ENCODE measurements at regions of chr14 and their contacts with region 1.

Region 1: GRCh38 chr14:50860478-50861086 is 11.3 kb upstream of the ABHD12B start:
- DNase-seq: peak; percentile 78 to 87
- ATAC-seq: peak; percentile 65 to 80; a peak in 5 of 6 replicates
- H3K4me3 ChIP-seq: peak overlapping the region; percentile 47
- H3K27ac ChIP-seq: peak overlapping the region; percentile 60 to 76
- H3K4me1 ChIP-seq: 0 out of 3 replicates have a peak, but pooled peaks cover 3% of the 10 kb centered on the region
- CTCF ChIP-seq: peak; percentile 75
- EP300 ChIP-seq: no peak
- POLR2A ChIP-seq: no peak
- RAD21 ChIP-seq: peak; percentile 74 to 76

Region 2: DNA sequence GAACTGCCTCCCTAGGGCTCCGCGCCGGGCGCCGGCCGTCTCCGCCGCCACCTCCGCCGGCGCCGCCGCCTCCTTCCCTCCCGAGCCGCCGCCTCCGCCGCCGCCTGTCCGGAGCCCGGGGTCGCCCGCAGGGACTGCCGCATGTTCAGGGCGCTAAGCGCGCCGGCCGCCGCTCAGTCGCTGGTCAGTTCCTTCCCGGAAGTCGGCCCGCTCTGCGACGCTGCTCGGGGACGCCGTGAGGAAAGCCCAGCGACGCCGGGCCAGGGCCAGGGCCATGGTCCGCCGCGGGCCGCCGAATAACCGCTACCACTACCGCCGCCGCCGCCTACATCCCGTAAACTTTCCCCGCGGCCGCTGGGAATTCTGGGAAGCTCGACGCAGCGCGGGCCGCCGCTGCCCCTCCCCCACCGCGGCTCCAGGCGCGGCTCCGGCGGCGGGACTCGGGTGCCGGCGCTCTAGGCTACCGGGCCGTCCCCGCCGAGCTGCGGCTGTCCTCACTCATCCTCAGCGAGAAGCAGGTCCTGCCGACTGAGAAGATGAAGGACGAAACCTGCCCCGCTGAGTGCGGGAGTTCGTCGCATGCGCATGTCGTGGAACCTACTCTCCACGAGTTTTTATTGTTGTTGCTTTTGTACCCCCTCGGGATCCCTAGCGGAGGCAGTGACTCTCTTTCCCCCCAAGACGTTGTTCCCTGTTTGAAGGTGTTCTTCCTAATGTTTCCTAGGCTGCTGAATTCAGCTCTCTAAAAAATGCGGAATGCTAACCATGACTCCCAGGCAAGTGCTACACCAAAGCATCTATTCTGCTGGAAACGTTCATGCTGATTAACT is 192.4 kb before region 1 on chr14 and contains the start of gene SAV1:
- CTCF ChIA-PET with region 1: no interaction called
- POLR2A ChIA-PET with region 1: interaction called, 11 read pairs
- DNase-seq: peak in 1 of 2 experiments; percentile 83
- ATAC-seq: peak; percentile 86 to 88
- H3K4me3 ChIP-seq: peak within 1 kb of the TSS; percentile 74
- H3K27ac ChIP-seq: peak within 1 kb of the TSS; percentile 87 to 96
- H3K4me1 ChIP-seq: peaks cover 16% of the 10 kb centered on the region
- CTCF ChIP-seq: 0 out of 3 replicates have a peak, but pooled peaks have one; percentile 10
- EP300 ChIP-seq: no peak
- POLR2A ChIP-seq: peak; percentile 92
- RAD21 ChIP-seq: no peak
- polyA plus RNA-seq, gene SAV1: 20.1 and 20.3 TPM in 2 replicates

Region 3: GRCh38 chr14:50830932-50831725 is 29.5 kb before region 1 on chr14 and contains the start of gene NIN:
- CTCF ChIA-PET with region 1: interaction called, 57 read pairs
- POLR2A ChIA-PET with region 1: interaction called, 6 read pairs
- DNase-seq: peak; percentile 43 to 72
- ATAC-seq: peak; percentile 96 to 98
- H3K4me3 ChIP-seq: peak within 1 kb of the TSS; percentile 98
- H3K27ac ChIP-seq: peak within 1 kb of the TSS; percentile 95 to 99
- H3K4me1 ChIP-seq: peaks cover 16% of the 10 kb centered on the region; the same call in 2 of the 3 replicates
- CTCF ChIP-seq: no peak
- EP300 ChIP-seq: no peak
- POLR2A ChIP-seq: peak; percentile 64
- RAD21 ChIP-seq: no peak
- polyA plus RNA-seq, gene NIN: 19.5 and 20.5 TPM in 2 replicates

Region 4: GRCh38 chr14:50839048-50839447 is 21.5 kb before region 1 on chr14:
- CTCF ChIA-PET with region 1: interaction called, 12 read pairs
- POLR2A ChIA-PET with region 1: no interaction called
- DNase-seq: no peak
- ATAC-seq: no peak; a peak in 1 of 6 replicates
- H3K4me3 ChIP-seq: no peak overlapping the region
- H3K27ac ChIP-seq: no peak overlapping the region
- H3K4me1 ChIP-seq: no peaks in the 10 kb centered on the region; the same call in 2 of the 3 replicates
- CTCF ChIP-seq: no peak
- EP300 ChIP-seq: no peak
- POLR2A ChIP-seq: no peak
- RAD21 ChIP-seq: no peak

Region 5: DNA sequence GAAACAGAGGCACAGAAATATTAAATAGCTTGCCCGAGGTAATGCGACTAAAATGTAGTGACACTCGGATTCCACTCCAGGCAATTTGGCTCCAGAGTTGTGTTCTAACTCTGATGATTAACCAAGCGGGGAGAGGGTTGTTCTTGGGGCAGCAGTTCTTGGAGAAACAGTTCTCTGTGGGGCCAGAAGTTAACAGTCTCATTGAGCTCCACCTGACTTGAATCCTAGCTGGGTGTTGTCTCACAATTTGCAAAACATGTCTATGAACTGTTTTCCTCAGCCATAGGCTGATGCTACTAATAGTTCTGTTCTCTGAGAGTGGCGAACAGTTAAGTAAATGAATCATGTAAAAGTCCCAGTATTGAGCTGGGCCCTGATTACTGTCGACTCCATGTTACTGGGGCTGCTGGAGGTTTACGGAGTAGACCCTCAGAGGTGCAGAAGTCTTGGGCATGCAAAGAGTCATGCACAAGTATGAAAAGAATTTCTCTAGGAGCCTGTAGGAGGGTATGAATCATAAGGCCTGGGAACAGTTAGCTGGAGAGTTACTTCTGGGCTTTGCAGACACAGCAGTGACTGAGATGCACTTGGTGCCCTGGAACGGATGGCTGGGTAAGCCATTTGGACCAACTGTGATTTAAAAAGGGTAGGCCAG is 14.2 kb before region 1 on chr14:
- CTCF ChIA-PET with region 1: interaction called, 41 read pairs
- POLR2A ChIA-PET with region 1: interaction called, 4 read pairs
- DNase-seq: peak in 1 of 2 experiments; percentile 15
- ATAC-seq: peak; percentile 70 to 89; a peak in 5 of 6 replicates
- H3K4me3 ChIP-seq: no peak overlapping the region
- H3K27ac ChIP-seq: peak overlapping the region in 1 of 2 experiments; percentile 2; a peak in 1 of 6 replicates
- H3K4me1 ChIP-seq: peaks cover 11% of the 10 kb centered on the region; the same call in 2 of the 3 replicates
- CTCF ChIP-seq: no peak
- EP300 ChIP-seq: no peak
- POLR2A ChIP-seq: no peak
- RAD21 ChIP-seq: no peak

Region 6: GRCh38 chr14:50871914-50872732 is 11.5 kb after region 1 on chr14 and contains the start of gene ABHD12B:
- CTCF ChIA-PET with region 1: interaction called, 21 read pairs
- POLR2A ChIA-PET with region 1: no interaction called
- DNase-seq: no peak
- ATAC-seq: no peak
- H3K4me3 ChIP-seq: no peak within 1 kb of the TSS
- H3K27ac ChIP-seq: no peak within 1 kb of the TSS
- H3K4me1 ChIP-seq: no peaks in the 10 kb centered on the region
- CTCF ChIP-seq: no peak
- EP300 ChIP-seq: no peak
- POLR2A ChIP-seq: no peak
- RAD21 ChIP-seq: no peak
- polyA plus RNA-seq, gene ABHD12B: not detected in 2 replicates

Region 7: DNA sequence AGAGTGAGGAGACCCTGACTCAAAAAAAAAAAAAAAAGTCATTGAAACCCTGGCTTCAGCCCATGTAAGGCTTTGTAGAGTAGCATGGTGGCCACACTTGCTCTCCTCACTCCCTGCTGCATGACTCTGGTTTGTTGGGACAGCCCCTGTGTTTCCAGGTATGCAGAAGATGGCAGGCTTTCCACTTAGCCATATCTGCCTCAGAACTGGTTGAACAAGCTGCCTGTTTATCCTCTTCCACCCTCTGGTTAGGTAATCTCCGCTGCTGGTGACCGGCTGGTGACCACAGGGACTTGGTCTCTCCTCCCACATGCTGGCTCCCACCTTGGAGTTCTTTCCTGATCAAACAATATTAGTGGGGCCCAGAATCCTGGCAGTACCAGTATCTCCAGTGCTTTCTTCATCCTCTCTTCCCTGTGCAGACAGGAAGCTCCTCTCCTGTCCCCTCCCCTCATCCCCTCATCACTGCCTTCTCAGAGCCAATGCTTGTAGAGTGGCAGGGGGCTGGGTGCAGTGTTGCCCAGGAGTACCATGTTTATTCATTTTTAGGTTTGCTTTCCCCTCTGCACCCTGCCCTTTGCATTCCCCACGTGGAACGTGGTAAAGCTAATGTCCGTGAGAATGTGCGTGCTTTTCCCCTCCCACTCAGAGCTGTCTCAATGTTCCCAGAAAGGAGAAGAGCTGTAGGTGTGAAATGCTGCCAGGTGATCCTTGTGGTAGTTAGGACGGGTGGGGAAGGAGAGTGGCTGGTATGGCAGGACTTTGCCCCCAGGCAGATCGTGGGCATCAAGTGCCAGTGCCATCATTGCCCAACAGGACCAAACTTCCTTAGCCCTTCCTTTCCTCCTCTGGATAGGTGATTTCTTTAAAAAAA is 22.6 kb after region 1 on chr14:
- CTCF ChIA-PET with region 1: interaction called, 12 read pairs
- POLR2A ChIA-PET with region 1: no interaction called
- DNase-seq: no peak
- ATAC-seq: no peak
- H3K4me3 ChIP-seq: no peak overlapping the region
- H3K27ac ChIP-seq: no peak overlapping the region
- H3K4me1 ChIP-seq: no peaks in the 10 kb centered on the region
- CTCF ChIP-seq: no peak
- EP300 ChIP-seq: no peak
- POLR2A ChIP-seq: no peak
- RAD21 ChIP-seq: no peak

Region 8: GRCh38 chr14:51185754-51186153 is 325.2 kb after region 1 on chr14:
- CTCF ChIA-PET with region 1: no interaction called
- POLR2A ChIA-PET with region 1: no interaction called
- DNase-seq: no peak
- ATAC-seq: no peak
- H3K4me3 ChIP-seq: no peak overlapping the region
- H3K27ac ChIP-seq: no peak overlapping the region
- H3K4me1 ChIP-seq: peaks cover 4% of the 10 kb centered on the region; the same call in 1 of the 3 replicates
- CTCF ChIP-seq: no peak
- EP300 ChIP-seq: no peak
- POLR2A ChIP-seq: no peak
- RAD21 ChIP-seq: no peak

Region 9: GRCh38 chr14:51939727-51940390 is 1079.3 kb after region 1 on chr14:
- CTCF ChIA-PET with region 1: no interaction called
- POLR2A ChIA-PET with region 1: no interaction called
- DNase-seq: no peak
- ATAC-seq: no peak
- H3K4me3 ChIP-seq: no peak overlapping the region
- H3K27ac ChIP-seq: no peak overlapping the region
- H3K4me1 ChIP-seq: no peaks in the 10 kb centered on the region
- CTCF ChIP-seq: no peak
- EP300 ChIP-seq: no peak
- POLR2A ChIP-seq: no peak
- RAD21 ChIP-seq: no peak

Measured in A549 (cell line).